ENCODE measurements at regions of chr19 and their contacts with region 1.

Region 1: DNA sequence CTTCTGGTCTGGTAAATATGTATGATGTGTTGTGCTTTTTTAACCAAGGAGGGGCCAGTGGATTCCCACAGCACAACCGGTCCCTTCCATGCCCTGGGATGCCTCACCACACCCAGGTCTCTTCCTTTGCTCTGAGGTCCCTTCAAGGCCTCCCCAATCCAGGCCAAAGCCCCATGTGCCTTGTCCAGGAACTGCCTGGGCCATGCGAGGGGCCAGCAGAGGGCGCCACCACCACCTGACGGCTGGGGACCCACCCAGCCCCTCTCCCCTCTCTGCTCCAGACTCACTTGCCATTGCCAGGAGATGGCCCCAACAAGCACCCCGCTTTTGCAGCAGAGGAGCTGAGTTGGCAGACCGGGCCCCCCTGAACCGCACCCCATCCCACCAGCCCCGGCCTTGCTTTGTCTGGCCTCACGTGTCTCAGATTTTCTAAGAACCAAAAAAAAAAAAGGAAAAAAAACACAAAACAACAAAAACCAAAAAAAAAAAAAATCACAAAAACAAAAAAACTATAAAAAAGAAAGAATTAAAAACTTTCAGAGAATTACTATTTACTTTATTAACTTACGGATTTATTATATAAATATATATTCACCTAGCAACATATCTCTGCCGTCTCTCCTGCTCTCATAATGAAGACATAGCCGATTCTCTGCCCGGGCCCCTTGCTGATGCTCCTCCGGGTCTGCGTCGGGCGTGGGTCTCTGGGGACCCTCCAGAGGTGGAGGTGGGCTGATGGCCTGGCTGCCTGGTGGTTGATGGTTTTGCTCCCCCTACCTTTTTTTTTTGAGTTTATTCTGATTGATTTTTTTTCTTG is 14.4 kb downstream of the CAPN12 start:
- DNase-seq: peak; percentile 92
- H3K4me3 Mint-ChIP-seq: no peak overlapping the region
- H3K27ac Mint-ChIP-seq: peak overlapping the region; percentile 64
- H3K4me1 Mint-ChIP-seq: peaks cover 44% of the 10 kb centered on the region
- H3K27me3 Mint-ChIP-seq: no peaks in the 10 kb centered on the region
- CTCF ChIP-seq: peak; percentile 88

Region 2: GRCh38 chr19:38544034-38544958 is 185.6 kb before region 1 on chr19:
- CTCF ChIA-PET with region 1: no interaction called
- intact Hi-C with region 1: loop called (anchors 2 kb)
- DNase-seq: peak; percentile 78
- H3K4me3 Mint-ChIP-seq: peak overlapping the region; percentile 34
- H3K27ac Mint-ChIP-seq: peak overlapping the region; percentile 13
- H3K4me1 Mint-ChIP-seq: peaks cover 20% of the 10 kb centered on the region
- H3K27me3 Mint-ChIP-seq: no peaks in the 10 kb centered on the region
- CTCF ChIP-seq: peak; percentile 54

Region 3: GRCh38 chr19:38812841-38813320 is 83.0 kb after region 1 on chr19 and contains the start of gene LGALS4:
- CTCF ChIA-PET with region 1: no interaction called
- intact Hi-C with region 1: loop called (anchors 5 kb)
- DNase-seq: peak; percentile 87
- H3K4me3 Mint-ChIP-seq: peak within 1 kb of the TSS; percentile 89
- H3K27ac Mint-ChIP-seq: peak within 1 kb of the TSS; percentile 90
- H3K4me1 Mint-ChIP-seq: peaks cover 33% of the 10 kb centered on the region
- H3K27me3 Mint-ChIP-seq: no peaks in the 10 kb centered on the region
- CTCF ChIP-seq: no peak
- total RNA-seq, gene LGALS4: 321 and 537 TPM in 2 replicates

Region 4: GRCh38 chr19:38831142-38831605 is 101.3 kb after region 1 on chr19:
- CTCF ChIA-PET with region 1: interaction called, 4 read pairs
- intact Hi-C with region 1: loop called (anchors 5 kb)
- DNase-seq: peak; percentile 93
- H3K4me3 Mint-ChIP-seq: peak overlapping the region; percentile 84
- H3K27ac Mint-ChIP-seq: peak overlapping the region; percentile 96
- H3K4me1 Mint-ChIP-seq: peaks cover 26% of the 10 kb centered on the region
- H3K27me3 Mint-ChIP-seq: no peaks in the 10 kb centered on the region
- CTCF ChIP-seq: no peak

Region 5: DNA sequence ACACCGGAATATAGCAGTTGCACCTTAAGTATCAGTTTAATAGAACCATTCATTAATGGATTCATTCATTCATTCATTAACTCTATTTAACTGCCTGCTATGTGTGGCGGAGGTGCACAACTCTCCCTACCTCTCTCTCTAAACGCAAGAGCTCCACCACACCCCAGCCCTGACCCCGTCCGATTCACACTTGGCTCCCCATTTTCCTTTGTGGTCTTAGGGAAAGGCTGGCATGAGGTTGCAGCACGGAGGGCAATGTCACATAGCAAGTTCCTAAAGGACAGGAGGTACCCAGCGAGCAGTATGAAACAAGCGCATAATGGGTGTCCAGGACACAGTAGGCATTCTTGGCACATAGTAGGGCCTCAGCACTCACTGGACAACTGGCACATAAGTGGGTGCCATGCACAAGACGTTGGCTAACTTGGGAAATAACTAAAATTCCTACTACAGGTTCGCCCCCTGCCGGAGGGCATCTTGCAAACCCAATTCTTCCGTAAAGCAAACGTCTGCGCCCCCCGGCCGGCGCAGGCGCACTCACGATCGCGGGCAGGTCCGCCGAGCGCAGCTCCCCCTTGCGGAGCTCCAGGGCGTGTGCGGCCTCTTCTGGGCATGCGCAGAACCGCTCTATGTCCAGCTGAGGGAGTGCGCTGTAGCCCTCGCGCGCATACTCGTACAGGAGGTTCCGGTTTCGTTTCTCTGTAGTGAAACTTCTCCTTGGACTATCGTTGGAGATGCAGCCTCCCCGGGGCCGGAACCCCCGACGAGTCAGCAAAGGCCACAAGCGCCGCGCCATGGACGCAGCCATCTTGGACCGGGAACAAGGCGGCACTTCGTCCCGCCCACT is 200.3 kb after region 1 on chr19 and contains the start of gene SARS2:
- CTCF ChIA-PET with region 1: interaction called, 3 read pairs
- intact Hi-C with region 1: loop called (anchors 10 kb)
- DNase-seq: peak; percentile 97
- H3K4me3 Mint-ChIP-seq: peak within 1 kb of the TSS; percentile 98
- H3K27ac Mint-ChIP-seq: peak within 1 kb of the TSS; percentile 93
- H3K4me1 Mint-ChIP-seq: peaks cover 23% of the 10 kb centered on the region
- H3K27me3 Mint-ChIP-seq: no peaks in the 10 kb centered on the region
- CTCF ChIP-seq: peak; percentile 99
- total RNA-seq, gene SARS2: 52.1 and 58.1 TPM in 2 replicates

Measured in Calu3 (cell line).